Activated T-helper 1 cell treated with anti-CD3 and anti-CD28 coated beads, Interleukin-12 subunit alpha, Interleukin-12 subunit beta, Interleukin-2, Interleukin-4 antibody, amounts not matched to agents 30 ng/mL and 10 ng/mL and 1 ng/mL, durations not matched to agents 14 hours and 24 hours and 36 hours (primary cell): ENCODE measurements at regions of chr5 and their contacts with region 1.

Region 1: GRCh38 chr5:170278611-170279452 is 18.7 kb downstream of the LCP2 start:
- DNase-seq: peak; percentile 88
- H3K4me3 Mint-ChIP-seq: peak overlapping the region; percentile 73
- H3K27ac Mint-ChIP-seq: peak overlapping the region; percentile 98
- H3K4me1 Mint-ChIP-seq: peaks cover 96% of the 10 kb centered on the region
- H3K27me3 Mint-ChIP-seq: no peaks in the 10 kb centered on the region

Region 2: GRCh38 chr5:169650701-169651331 is 628.0 kb before region 1 on chr5:
- intact Hi-C with region 1: loop called (anchors 10 kb)
- DNase-seq: peak; percentile 37
- H3K4me3 Mint-ChIP-seq: peak overlapping the region; percentile 72
- H3K27ac Mint-ChIP-seq: peak overlapping the region; percentile 99
- H3K4me1 Mint-ChIP-seq: peaks cover 99% of the 10 kb centered on the region
- H3K27me3 Mint-ChIP-seq: no peaks in the 10 kb centered on the region

Region 3: DNA sequence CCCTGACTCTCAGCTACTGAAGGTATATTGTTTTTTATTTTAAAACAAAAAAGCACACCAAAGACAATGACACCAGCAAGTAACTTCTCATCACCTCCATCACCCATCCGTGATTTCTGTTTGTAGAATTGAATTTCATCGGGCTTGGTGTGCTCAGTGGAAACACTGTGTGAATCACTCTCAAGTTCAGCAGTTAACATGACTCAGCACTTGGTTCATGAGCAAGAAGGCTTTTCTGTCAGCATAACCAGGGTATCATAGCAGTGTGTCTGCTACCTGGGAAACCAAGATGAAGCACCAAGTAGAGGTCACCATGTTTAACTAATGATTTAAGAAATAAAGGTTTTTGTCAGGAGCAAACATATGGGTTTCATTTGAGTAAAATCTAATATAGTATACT is 422.3 kb before region 1 on chr5:
- intact Hi-C with region 1: no loop called
- DNase-seq: no peak
- H3K4me3 Mint-ChIP-seq: no peak overlapping the region
- H3K27ac Mint-ChIP-seq: no peak overlapping the region
- H3K4me1 Mint-ChIP-seq: peaks cover 42% of the 10 kb centered on the region
- H3K27me3 Mint-ChIP-seq: no peaks in the 10 kb centered on the region

Region 4: GRCh38 chr5:170056561-170057267 is 222.1 kb before region 1 on chr5:
- intact Hi-C with region 1: no loop called
- DNase-seq: no peak
- H3K4me3 Mint-ChIP-seq: no peak overlapping the region
- H3K27ac Mint-ChIP-seq: no peak overlapping the region
- H3K4me1 Mint-ChIP-seq: no peaks in the 10 kb centered on the region
- H3K27me3 Mint-ChIP-seq: no peaks in the 10 kb centered on the region

Region 5: DNA sequence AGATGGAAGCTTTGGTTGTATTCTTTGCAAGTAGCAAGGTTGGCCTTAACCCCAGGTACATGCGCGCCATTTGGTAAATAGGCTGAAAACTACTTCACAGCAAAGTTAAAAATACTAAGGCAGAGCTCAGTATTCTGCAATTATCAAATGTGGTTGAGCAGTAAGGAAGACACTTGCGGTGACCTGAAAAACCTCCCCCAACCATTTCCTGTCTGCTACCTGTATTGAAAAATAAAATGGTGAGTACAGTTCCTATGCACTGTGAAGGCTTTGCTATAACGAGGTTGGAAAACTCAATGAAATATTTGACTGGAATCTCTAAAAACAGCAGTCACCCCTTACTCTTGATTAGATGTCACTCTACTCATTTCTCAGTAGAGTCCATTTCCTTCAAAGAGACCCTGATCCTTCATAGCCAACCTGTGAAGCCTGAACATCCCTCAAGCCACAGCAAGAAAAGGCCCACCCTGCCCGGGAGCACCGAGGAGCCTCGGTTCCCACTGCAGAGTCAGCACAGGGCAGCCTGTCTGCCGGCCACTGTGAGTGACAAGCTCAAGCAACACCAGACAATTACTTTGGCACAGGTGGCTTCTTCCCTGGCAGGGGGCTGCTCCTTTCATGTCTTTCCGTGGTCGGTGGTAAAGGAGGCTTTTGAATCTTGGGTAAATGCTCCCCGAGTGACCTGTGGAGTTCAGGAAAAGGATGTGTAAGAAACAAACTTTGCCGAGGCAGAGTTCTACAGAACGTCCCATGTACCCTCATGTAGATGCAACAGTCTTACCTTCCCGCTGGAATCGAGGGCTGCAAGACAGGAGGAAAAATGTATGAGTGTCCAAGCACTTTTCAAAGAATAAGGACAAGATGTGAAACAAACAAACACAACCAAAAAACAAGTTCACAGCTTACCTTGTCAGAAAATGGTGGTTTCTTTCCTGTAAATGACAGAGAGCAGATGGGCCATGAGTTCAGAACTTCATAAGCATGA is 16.5 kb before region 1 on chr5:
- intact Hi-C with region 1: loop called (anchors 2 kb)
- DNase-seq: peak; percentile 47
- H3K4me3 Mint-ChIP-seq: peak overlapping the region; percentile 64
- H3K27ac Mint-ChIP-seq: peak overlapping the region; percentile 85
- H3K4me1 Mint-ChIP-seq: peaks cover 87% of the 10 kb centered on the region
- H3K27me3 Mint-ChIP-seq: no peaks in the 10 kb centered on the region

Region 6: DNA sequence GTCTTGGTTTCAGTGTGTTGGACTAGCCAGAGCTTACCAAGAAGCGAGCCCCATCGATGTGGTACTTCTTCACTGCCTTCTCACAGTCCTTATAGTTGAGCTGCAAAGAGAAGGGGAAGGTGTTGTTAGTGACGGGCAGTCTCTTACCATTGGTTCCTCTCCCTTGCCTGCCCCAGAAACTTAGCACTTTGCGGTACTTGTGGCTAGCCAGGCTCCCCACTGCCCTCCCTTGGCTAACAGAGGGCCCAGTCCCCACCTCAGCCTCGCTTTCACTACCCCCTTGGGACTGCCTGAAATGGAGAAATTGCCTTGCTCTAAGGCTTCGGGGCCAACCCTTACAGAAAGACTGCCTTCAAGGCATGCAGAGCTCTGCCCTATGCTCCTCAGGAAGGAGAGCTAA is 14.4 kb after region 1 on chr5:
- intact Hi-C with region 1: loop called (anchors 1 kb)
- DNase-seq: no peak
- H3K4me3 Mint-ChIP-seq: peak overlapping the region; percentile 99
- H3K27ac Mint-ChIP-seq: peak overlapping the region; percentile 87
- H3K4me1 Mint-ChIP-seq: peaks cover 79% of the 10 kb centered on the region
- H3K27me3 Mint-ChIP-seq: no peaks in the 10 kb centered on the region

Region 7: DNA sequence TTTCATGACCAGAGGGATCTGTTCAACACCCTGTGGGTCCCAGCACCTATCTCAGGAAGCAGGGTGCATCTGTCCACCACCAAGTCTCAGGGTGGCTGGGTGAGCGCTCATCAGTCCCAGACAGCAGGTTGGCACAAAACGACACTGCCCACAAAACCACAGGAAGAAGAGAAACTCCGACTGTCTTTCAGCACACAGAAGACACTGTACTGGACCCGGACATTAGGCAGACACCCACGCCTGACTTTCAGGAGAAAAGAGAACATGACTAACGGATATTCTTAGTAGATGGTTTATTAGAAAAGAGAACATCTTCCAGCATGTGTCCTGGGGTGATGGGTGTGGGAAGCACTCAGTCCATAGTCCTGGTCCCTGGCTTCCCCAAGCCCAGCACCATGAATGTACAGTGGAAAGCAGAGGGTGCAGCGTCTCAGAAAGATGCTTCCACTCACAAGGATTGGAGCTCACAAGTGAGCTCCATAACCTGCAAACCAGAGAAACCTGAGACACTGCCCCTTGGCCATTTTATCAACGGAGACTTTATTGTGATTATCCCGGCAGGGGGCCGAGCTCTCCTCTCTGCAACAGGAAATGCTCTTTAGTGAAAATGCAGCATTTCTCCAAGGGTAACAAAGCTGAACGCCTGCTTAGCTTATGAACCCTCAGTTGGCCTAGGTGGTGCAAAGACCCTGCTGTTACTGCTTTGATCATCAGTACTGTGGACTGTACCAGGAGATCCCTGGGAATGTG is 54.5 kb after region 1 on chr5:
- intact Hi-C with region 1: loop called (anchors 1 kb)
- DNase-seq: peak; percentile 41
- H3K4me3 Mint-ChIP-seq: peak overlapping the region; percentile 76
- H3K27ac Mint-ChIP-seq: no peak overlapping the region
- H3K4me1 Mint-ChIP-seq: peaks cover 8% of the 10 kb centered on the region
- H3K27me3 Mint-ChIP-seq: peaks cover 2% of the 10 kb centered on the region

Region 8: GRCh38 chr5:171387345-171387969 is 1108.6 kb after region 1 on chr5 and contains the start of gene NPM1:
- intact Hi-C with region 1: loop called (anchors 5 kb)
- DNase-seq: peak; percentile 97
- H3K4me3 Mint-ChIP-seq: peak within 1 kb of the TSS; percentile 97
- H3K27ac Mint-ChIP-seq: peak within 1 kb of the TSS; percentile 98
- H3K4me1 Mint-ChIP-seq: peaks cover 43% of the 10 kb centered on the region
- H3K27me3 Mint-ChIP-seq: peaks cover 8% of the 10 kb centered on the region
- total RNA-seq, gene NPM1: 2,729 and 2,809 TPM in 2 replicates